ENCODE measurements at regions of chr2 and their contacts with region 1.

Region 1: DNA sequence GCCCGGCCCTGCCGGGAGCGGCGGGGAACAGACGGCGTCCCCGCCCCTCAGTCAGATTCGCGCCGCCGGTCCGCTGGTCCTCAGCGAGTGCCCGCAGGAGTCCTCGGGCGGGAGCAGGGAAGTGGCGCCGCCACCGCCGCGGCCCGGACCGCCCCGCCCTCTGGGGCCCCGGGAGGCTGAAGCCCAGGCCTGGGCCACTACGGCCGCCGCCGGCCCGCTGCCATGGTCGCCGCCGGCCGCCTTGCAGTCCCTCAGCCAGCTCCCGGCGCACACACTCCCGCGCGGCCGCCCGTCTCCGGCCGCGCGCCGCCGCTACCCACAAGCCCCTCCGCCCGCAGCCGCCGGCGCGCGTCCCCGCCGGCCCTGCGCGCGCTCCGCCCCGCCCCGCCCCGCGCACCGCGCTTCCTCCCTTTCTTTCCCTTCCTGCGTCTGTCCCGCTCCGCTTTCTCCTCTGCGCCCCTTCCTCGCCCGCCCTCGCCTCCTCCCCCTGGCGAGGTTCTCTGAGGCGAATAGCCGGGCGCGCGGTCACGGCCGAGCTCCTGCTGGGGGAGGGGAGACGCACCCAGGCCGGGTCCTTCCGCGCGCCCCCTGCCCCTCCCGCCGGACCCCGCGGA is at the start of gene ROCK2:
- DNase-seq: peak; percentile 73
- ATAC-seq: peak; percentile 67
- H3K4me3 Mint-ChIP-seq: peak within 1 kb of the TSS; percentile 99
- H3K27ac Mint-ChIP-seq: peak within 1 kb of the TSS; percentile 86
- H3K4me1 Mint-ChIP-seq: peaks cover 29% of the 10 kb centered on the region
- H3K27me3 Mint-ChIP-seq: no peaks in the 10 kb centered on the region
- CTCF ChIP-seq: no peak
- total RNA-seq, gene ROCK2: 18.5 and 18.8 TPM in 2 replicates

Region 2: DNA sequence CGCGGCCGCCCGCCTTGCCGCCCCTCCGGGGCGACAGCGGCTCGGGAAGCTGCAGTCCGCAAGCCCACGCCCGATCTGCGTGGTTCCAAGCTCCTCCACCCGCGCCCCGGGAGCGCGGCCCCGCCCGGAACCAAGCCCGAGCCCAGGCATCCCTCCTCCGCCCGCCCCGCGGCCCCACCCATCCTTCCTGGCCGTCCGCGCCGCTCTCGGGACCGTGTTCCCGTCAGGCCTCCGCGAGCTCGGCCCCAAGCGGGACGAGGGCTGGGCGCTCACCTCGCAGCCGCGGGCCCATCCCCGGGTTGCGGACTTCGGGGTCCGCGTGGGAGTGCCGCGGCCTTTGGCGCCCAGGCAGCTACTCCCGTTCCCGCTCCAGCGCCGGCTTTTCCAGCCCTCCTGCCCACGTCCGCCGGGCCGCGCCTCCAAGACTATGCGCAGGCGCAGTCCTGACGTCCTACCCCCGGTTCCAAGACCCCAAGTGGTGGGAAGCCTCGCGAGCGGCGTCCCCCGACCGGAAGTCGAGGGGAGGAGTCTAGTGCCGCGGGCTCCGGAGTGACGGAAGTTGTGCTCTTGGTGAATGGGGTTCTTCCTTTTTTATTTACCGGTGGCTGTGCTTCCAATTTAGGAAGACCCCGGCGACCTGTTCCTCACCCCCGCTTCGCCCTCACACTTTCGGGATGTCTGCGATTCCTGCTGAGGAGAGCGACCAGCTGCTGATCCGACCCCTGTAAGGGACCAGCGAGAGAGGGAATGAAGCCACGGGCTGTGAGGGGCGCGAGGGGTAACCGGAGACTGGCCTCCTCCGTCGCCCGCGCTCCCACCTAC is 1921.1 kb before region 1 on chr2 and contains the starts of genes CPSF3 and ITGB1BP1:
- CTCF ChIA-PET with region 1: no interaction called
- POLR2A ChIA-PET with region 1: no interaction called
- intact Hi-C with region 1: loop called (anchors 10 kb)
- DNase-seq: peak; percentile 96
- ATAC-seq: peak; percentile 86
- H3K4me3 Mint-ChIP-seq: no peak within 1 kb of the TSS
- H3K27ac Mint-ChIP-seq: peak within 1 kb of the TSS; percentile 91
- H3K4me1 Mint-ChIP-seq: peaks cover 22% of the 10 kb centered on the region
- H3K27me3 Mint-ChIP-seq: no peaks in the 10 kb centered on the region
- CTCF ChIP-seq: no peak
- total RNA-seq, gene CPSF3: 44.0 and 44.6 TPM in 2 replicates
- total RNA-seq, gene ITGB1BP1: 39.6 and 40.5 TPM in 2 replicates

Region 3: GRCh38 chr2:11224887-11225286 is 119.6 kb before region 1 on chr2:
- CTCF ChIA-PET with region 1: no interaction called
- POLR2A ChIA-PET with region 1: no interaction called
- intact Hi-C with region 1: loop called (anchors 5 kb)
- DNase-seq: no peak
- ATAC-seq: peak; percentile 68
- H3K4me3 Mint-ChIP-seq: no peak overlapping the region
- H3K27ac Mint-ChIP-seq: no peak overlapping the region
- H3K4me1 Mint-ChIP-seq: peaks cover 7% of the 10 kb centered on the region
- H3K27me3 Mint-ChIP-seq: no peaks in the 10 kb centered on the region
- CTCF ChIP-seq: no peak

Region 4: GRCh38 chr2:11377928-11378545 is 33.6 kb after region 1 on chr2:
- CTCF ChIA-PET with region 1: no interaction called
- POLR2A ChIA-PET with region 1: interaction called, 7 read pairs
- intact Hi-C with region 1: loop called (anchors 1 kb)
- DNase-seq: no peak
- ATAC-seq: peak; percentile 74
- H3K4me3 Mint-ChIP-seq: peak overlapping the region; percentile 32
- H3K27ac Mint-ChIP-seq: peak overlapping the region; percentile 43
- H3K4me1 Mint-ChIP-seq: peaks cover 50% of the 10 kb centered on the region
- H3K27me3 Mint-ChIP-seq: no peaks in the 10 kb centered on the region
- CTCF ChIP-seq: no peak

Region 5: DNA sequence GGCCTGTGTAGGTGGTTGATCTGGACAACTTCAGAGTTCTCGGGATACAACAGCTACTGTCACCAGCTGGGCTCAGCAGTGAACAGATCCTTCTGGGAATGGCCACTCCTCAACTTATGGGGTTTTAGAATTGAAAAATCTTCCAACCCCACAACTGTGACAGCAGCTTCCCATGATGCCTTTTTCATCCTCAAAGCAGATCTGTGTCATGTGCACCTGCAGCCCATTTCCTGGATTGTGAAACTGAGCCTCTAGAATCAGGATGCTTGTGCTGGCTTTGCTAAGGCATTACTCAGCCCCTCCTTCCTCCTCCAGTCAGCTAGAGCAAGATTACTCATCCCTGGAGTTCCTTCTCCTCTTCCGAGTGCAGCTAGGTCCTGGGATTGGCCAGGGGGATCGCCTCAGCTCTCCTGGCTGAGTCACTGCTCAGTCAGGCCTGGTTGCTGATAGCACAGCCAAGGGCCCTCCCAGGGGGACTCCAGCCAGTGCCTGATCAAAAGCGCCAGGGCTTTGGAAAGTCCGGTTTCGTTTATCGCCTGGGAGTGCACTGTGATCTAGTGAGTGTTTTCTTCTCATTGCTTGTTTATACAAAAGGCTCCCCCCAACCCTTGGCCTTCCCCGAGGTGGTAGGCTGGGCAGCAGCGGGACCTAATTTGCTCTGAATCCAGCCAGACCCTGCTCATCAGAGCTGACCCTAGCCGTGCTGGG is 399.6 kb after region 1 on chr2:
- CTCF ChIA-PET with region 1: no interaction called
- POLR2A ChIA-PET with region 1: no interaction called
- intact Hi-C with region 1: loop called (anchors 10 kb)
- DNase-seq: peak; percentile 62
- ATAC-seq: peak; percentile 60
- H3K4me3 Mint-ChIP-seq: peak overlapping the region; percentile 71
- H3K27ac Mint-ChIP-seq: peak overlapping the region; percentile 82
- H3K4me1 Mint-ChIP-seq: peaks cover 54% of the 10 kb centered on the region
- H3K27me3 Mint-ChIP-seq: no peaks in the 10 kb centered on the region
- CTCF ChIP-seq: no peak

Region 6: DNA sequence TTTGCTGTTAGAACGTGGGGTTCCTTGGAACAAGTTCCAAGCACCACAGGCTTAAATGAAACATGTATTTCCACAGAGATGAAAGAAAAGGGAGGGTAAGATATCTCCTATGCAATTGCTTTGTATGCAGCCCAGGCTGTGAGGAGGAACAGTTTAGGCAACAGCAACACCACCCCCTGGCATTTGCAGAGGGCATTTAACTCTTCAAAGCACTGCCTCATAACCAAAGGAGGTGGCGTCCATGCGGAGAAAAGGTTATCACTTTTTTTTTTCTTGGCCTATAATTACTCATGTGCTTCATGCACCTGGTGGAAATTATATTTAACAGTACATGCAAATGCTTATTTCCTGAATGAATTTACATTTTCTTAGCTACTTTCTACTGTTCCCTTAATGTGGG is 687.9 kb after region 1 on chr2:
- CTCF ChIA-PET with region 1: no interaction called
- POLR2A ChIA-PET with region 1: no interaction called
- intact Hi-C with region 1: no loop called
- DNase-seq: no peak
- ATAC-seq: peak; percentile 86
- H3K4me3 Mint-ChIP-seq: peak overlapping the region; percentile 62
- H3K27ac Mint-ChIP-seq: peak overlapping the region; percentile 74
- H3K4me1 Mint-ChIP-seq: peaks cover 64% of the 10 kb centered on the region
- H3K27me3 Mint-ChIP-seq: no peaks in the 10 kb centered on the region
- CTCF ChIP-seq: no peak